CD8-positive, alpha-beta memory T cell (primary cell): ENCODE measurements at regions of chr11 and their contacts with region 1.

Region 1: GRCh38 chr11:10653926-10654810 is 39.4 kb downstream of the IRAG1 start:
- DNase-seq: peak in 3 of 5 donors; percentile 3 to 45 (median 24)
- H3K4me3 ChIP-seq: no peak overlapping the region
- H3K4me3 Mint-ChIP-seq: no peak overlapping the region
- H3K27ac ChIP-seq: no peak overlapping the region
- H3K27ac Mint-ChIP-seq: peak overlapping the region in 2 of 8 donors; percentile 52 to 60
- H3K4me1 ChIP-seq: no peaks in the 10 kb centered on the region
- H3K4me1 Mint-ChIP-seq: peaks cover 0 to 4% (median 0%) of the 10 kb centered on the region in 3 donors
- H3K27me3 ChIP-seq: no peaks in the 10 kb centered on the region
- H3K27me3 Mint-ChIP-seq: peaks cover 0 to 5% of the 10 kb centered on the region in 2 donors

Region 2: DNA sequence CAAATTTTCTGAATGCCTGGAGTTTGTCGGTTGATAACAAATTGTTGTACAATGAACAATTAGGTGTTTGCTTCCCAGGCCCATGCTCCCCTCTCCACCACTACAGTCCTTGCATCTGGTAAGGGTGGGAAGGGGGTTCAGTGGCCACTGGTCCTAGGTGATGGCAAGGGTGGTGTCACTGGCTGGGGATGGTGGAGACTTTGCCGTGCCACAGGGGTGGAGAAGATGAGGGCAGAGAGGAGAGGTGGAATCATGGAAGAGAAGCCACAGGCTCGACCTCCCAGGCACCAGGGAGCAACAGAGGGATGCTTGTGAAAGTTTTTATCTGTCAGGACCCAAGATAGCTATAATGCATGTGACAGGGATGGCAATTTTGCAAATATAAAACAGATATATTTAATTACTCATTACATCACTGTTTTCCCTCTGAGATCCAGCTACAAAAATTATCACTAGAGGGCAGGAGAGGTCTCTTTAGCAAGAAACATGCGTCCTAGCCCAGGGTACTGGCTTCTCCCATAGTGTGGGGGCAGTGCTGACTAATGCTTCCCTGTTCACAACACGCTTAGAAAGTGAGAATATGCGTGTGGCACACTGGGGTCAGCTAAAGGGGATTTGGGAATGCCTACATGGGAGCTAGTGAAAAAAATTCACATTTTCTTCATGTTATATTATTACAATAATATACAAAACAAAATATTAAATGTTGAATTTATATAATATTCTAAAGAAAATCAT is 248.1 kb before region 1 on chr11:
- CTCF ChIA-PET with region 1: interaction called, 67 read pairs
- POLR2A ChIA-PET with region 1: no interaction called
- DNase-seq: peak in 4 of 5 donors; percentile 6 to 58 (median 42)
- H3K4me3 ChIP-seq: no peak overlapping the region
- H3K4me3 Mint-ChIP-seq: no peak overlapping the region
- H3K27ac ChIP-seq: no peak overlapping the region
- H3K27ac Mint-ChIP-seq: peak overlapping the region in 2 of 8 donors; percentile 70 to 84
- H3K4me1 ChIP-seq: peaks cover 10% of the 10 kb centered on the region
- H3K4me1 Mint-ChIP-seq: peaks cover 10 to 17% (median 14%) of the 10 kb centered on the region in 3 donors
- H3K27me3 ChIP-seq: no peaks in the 10 kb centered on the region
- H3K27me3 Mint-ChIP-seq: no peaks in the 10 kb centered on the region

Region 3: DNA sequence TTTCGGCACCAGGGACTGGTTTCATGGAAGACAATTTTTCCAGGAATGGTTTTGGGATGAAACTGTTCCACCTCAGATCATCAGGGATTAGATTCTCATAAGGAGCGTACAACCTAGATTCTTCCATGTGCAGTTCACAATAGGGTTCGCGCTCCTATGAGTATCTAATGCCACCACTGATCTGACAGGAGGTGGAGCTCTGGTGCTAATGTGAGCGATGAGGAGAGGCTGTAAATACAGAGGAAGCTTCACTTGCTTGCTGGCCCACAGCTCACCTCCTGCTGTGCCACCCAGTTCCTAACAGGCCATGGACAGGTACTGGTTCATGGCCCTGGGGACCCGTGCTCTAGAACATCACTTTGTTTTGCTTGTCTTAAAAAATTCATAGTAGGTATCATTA is 240.9 kb before region 1 on chr11:
- CTCF ChIA-PET with region 1: interaction called, 32 read pairs
- POLR2A ChIA-PET with region 1: no interaction called
- DNase-seq: peak in 4 of 5 donors; percentile 12 to 65 (median 44)
- H3K4me3 ChIP-seq: no peak overlapping the region
- H3K4me3 Mint-ChIP-seq: peak overlapping the region in 1 of 7 donors; percentile 49
- H3K27ac ChIP-seq: no peak overlapping the region
- H3K27ac Mint-ChIP-seq: peak overlapping the region in 1 of 8 donors; percentile 41
- H3K4me1 ChIP-seq: peaks cover 27% of the 10 kb centered on the region
- H3K4me1 Mint-ChIP-seq: peaks cover 31 to 35% (median 35%) of the 10 kb centered on the region in 3 donors
- H3K27me3 ChIP-seq: no peaks in the 10 kb centered on the region
- H3K27me3 Mint-ChIP-seq: peaks cover 0 to 1% of the 10 kb centered on the region in 2 donors

Region 4: DNA sequence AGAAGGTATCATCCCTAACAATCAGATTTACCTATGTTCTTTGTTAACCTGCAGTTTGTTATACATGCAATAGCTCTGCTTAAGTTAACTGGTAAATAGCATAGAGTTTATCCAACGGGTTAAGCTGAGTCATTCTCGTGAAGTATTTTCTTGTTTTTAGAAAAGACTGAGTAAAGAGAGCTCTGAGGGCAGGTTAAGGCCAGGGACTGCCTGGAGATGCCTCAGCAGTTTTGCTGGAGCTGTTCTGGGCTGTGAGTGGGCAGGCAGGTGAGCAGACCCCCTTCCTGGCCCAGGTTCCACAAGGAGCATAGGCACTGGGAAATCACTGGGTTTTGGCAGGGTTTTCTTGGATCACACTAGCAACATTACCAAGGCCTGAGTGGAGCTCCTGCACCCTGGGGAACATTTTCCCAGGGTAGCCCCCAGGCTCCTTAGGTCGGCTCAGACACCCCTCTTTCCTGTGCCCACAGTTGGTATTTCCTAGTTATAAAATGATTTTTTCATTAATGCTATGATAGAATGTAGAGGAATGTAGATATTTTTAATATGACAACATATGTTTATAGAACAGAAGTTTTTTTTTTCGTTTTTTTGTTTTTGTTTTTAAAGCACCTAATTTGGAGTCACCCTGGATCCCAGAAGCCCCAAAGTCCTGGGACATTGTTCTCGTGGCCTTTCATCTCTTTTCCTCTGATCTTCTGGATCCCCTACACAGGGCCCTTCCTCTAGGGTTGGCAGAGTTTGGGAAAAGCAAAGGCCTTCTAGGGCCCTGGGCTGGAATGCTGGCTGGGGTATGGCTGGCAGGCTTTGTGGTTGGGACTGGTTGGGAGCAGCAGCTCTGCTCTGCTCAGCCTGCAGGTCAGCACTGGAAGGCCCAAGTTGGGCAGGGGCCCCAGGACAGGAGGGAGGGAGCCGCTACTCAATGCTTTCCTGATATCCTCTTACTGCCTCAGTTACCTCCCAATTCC is 12.7 kb after region 1 on chr11:
- CTCF ChIA-PET with region 1: interaction called, 12 read pairs
- POLR2A ChIA-PET with region 1: no interaction called
- DNase-seq: no peak
- H3K4me3 ChIP-seq: no peak overlapping the region
- H3K4me3 Mint-ChIP-seq: no peak overlapping the region
- H3K27ac ChIP-seq: peak overlapping the region; percentile 49
- H3K27ac Mint-ChIP-seq: no peak overlapping the region
- H3K4me1 ChIP-seq: no peaks in the 10 kb centered on the region
- H3K4me1 Mint-ChIP-seq: no peaks in the 10 kb centered on the region
- H3K27me3 ChIP-seq: no peaks in the 10 kb centered on the region
- H3K27me3 Mint-ChIP-seq: peaks cover 9 to 25% of the 10 kb centered on the region in 2 donors